ENCODE measurements at regions of chr12 and their contacts with region 1.

Region 1: GRCh38 chr12:19757317-19757877 is 318.1 kb downstream of the AEBP2 start:
- DNase-seq: no peak
- H3K4me3 Mint-ChIP-seq: no peak overlapping the region
- H3K27ac Mint-ChIP-seq: no peak overlapping the region
- H3K4me1 Mint-ChIP-seq: peaks cover 14% of the 10 kb centered on the region
- H3K27me3 Mint-ChIP-seq: no peaks in the 10 kb centered on the region

Region 2: DNA sequence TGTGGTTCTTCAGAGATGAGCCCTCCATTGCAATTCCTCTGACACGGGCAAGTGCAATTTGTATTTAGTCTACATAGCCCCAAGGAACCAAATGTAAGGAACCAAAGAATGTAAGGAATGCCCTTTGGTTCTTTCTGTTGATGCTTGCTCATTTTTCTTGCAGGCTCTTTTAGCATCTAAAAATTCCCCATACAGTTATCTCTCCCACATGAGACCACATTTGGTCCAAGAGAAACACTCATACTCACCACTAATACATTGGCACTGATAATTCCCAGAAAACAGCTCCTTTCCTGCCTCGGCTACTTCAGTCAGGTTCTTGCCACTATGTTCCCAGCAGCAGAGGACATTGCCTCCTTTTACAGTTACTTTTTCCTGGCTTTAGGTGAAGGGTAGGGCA is 14.5 kb after region 1 on chr12:
- intact Hi-C with region 1: no loop called
- DNase-seq: no peak
- H3K4me3 Mint-ChIP-seq: no peak overlapping the region
- H3K27ac Mint-ChIP-seq: no peak overlapping the region
- H3K4me1 Mint-ChIP-seq: peaks cover 2% of the 10 kb centered on the region
- H3K27me3 Mint-ChIP-seq: peaks cover 2% of the 10 kb centered on the region

Region 3: DNA sequence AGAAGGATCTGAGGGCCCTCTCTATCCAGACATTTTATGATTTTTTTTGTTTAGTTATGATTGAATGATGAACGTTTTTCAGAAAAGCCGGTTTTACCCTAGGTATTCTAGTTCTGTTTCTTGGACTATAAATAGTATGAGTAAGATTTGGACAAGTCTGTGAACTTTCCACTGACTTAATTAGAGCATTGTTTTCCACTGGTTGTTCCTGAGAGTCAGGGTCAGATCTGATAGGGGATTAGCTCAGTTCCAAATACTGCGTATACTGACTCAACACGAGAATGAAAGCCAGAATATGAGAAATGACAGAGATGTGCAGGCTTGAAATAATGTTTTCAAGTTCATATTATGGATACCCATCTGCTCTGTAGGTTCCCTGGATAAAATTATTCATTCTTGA is 43.5 kb after region 1 on chr12:
- intact Hi-C with region 1: loop called (anchors 5 kb)
- DNase-seq: no peak
- H3K4me3 Mint-ChIP-seq: no peak overlapping the region
- H3K27ac Mint-ChIP-seq: peak overlapping the region; percentile 83
- H3K4me1 Mint-ChIP-seq: peaks cover 21% of the 10 kb centered on the region
- H3K27me3 Mint-ChIP-seq: no peaks in the 10 kb centered on the region

Measured in activated T-helper 2 cell treated with anti-CD3 and anti-CD28 coated beads, Interferon-gamma antibody, Interleukin-2, Interleukin-4, amounts not matched to agents 10 μg/mL and 5 μg/mL and 100 μg/mL, durations not matched to agents 14 hours and 24 hours and 36 hours (primary cell).